ENCODE measurements at regions of chr12 and their contacts with region 1.

Region 1: DNA sequence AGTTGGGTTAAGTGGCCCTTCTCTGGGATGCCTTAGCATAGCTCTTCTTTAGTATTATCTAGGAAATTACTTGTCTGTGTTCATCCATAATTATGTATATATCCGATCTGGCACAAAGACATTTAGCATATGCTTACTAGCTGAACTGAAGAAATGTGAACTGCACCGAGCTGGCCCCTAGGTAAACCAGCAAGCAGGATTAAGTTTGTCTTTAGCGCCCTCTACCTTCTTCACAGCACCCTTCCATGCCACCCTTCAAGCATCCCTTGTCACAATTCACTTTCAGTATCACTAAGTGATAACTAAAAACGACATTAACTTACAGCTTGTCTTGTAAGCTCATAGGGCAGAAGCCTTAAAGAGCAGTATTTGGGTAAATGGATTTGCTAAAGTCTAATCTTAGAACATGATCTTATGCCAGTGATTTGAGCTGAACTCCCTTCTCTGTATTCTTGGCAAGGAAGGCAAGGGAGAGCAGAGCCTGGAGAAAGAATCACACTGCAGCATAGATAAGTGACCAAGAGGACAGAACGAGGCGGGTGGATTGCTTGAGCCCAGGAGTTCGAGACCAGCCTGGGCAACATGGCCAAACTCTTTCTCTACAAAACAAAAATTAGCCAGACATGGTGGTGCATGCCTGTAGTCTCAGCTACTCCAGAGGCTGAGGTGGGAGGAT is 2.6 kb upstream of the HAL start:
- H3K4me3 ChIP-seq: no peak overlapping the region
- H3K27ac ChIP-seq: no peak overlapping the region
- H3K4me1 ChIP-seq: no peaks in the 10 kb centered on the region
- CTCF ChIP-seq: peak; percentile 59; the same call in 1 of the 2 replicates

Region 2: DNA sequence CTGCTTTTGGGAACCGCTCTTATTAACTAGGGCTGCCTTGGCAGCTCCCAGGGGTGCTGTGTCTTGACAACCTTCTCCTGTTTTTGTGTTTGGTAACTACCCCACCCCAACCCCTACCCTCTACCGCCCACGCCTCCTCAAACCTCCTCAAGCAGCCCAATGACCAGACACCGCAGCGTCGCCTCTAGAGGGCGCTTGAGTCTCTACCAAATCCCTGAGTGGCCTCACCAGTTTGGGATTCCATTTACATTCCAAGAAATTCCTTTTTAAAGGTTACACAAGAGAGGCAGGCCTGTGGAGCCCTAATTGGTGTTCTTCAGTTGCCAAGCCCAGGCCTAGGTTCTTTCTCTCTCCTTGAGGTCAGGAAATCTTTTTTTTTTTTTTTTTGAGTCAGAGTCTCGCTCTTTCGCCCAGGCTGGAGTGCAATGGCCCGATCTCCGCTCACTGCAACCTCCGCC is 375.1 kb before region 1 on chr12:
- CTCF ChIA-PET with region 1: no interaction called
- POLR2A ChIA-PET with region 1: no interaction called
- H3K4me3 ChIP-seq: no peak overlapping the region
- H3K27ac ChIP-seq: no peak overlapping the region
- H3K4me1 ChIP-seq: no peaks in the 10 kb centered on the region; the same call in 1 of the 2 replicates
- CTCF ChIP-seq: no peak

Region 3: GRCh38 chr12:95918194-95918993 is 80.4 kb before region 1 on chr12:
- CTCF ChIA-PET with region 1: interaction called, 58 read pairs
- POLR2A ChIA-PET with region 1: no interaction called
- H3K4me3 ChIP-seq: no peak overlapping the region
- H3K27ac ChIP-seq: no peak overlapping the region
- H3K4me1 ChIP-seq: no peaks in the 10 kb centered on the region
- CTCF ChIP-seq: peak; percentile 71; the same call in 1 of the 2 replicates

Region 4: DNA sequence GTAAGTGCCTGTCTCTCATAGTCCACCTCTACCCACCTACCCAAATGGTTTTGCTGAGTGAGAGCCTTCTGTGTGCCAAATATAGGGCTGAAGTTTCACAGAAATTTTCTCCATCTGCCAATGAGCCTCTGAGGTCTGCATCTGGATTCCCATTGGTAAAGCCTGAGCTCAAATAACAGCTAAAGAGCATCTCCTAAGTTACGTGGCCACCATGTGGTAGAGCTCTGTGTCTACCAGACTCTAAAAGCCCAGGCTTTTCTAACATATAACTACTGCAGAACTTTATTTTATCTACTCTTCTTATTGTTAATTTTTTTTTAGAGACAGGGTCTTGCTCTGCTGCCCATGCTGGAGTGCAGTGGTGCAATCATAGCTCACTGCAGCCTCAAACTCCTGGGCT is 39.6 kb before region 1 on chr12:
- CTCF ChIA-PET with region 1: interaction called, 12 read pairs
- POLR2A ChIA-PET with region 1: no interaction called
- H3K4me3 ChIP-seq: no peak overlapping the region
- H3K27ac ChIP-seq: no peak overlapping the region
- H3K4me1 ChIP-seq: no peaks in the 10 kb centered on the region
- CTCF ChIP-seq: no peak

Region 5: DNA sequence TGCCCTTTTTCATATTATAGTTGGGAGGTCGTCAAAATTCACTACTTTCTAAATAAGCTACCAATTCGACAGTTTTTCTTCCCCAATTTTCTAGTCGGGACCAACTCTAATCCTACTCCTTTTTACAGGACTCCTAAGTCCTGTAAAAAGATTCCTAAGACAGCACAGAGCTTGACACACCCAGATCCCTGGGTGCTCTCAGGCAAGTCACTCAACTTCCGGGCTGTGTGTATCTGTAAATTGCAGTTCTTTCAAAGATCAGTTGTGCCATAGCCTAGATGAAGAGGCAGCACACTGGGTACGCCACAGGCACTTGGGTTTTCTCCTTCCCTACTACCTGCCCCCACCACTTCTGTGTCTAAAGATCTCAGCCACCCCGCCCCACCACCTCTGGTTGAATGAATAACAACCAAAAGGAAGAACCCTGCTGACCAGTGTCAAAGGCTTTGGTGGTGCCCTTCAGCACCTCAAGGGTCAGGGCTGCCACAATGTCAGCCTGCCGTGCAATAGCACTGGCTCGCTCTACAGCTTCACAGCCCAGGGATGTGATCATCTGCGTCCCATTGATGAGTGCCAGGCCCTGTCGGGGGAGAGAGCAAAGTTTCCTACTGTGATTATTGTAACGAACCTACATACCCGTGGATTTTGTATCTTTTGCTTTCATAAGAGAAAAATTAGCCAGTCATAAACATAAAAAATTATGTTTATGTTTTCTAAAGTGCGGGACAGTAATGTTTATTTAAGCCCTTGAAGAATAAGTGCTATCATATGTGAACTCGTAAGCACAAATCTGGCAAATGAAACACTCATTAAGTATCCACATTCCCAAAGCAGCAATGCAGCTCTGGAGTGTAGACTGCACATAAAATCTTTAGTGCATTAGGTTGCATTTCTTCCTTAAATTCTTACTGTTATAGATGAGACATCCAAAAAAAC is 11.8 kb before region 1 on chr12:
- CTCF ChIA-PET with region 1: interaction called, 22 read pairs
- POLR2A ChIA-PET with region 1: no interaction called
- H3K4me3 ChIP-seq: no peak overlapping the region
- H3K27ac ChIP-seq: no peak overlapping the region
- H3K4me1 ChIP-seq: no peaks in the 10 kb centered on the region
- CTCF ChIP-seq: no peak

Region 6: GRCh38 chr12:96014943-96015599 is 16.3 kb after region 1 on chr12:
- CTCF ChIA-PET with region 1: interaction called, 14 read pairs
- POLR2A ChIA-PET with region 1: no interaction called
- H3K4me3 ChIP-seq: no peak overlapping the region
- H3K27ac ChIP-seq: no peak overlapping the region
- H3K4me1 ChIP-seq: no peaks in the 10 kb centered on the region
- CTCF ChIP-seq: no peak

Region 7: GRCh38 chr12:96035278-96036236 is 36.8 kb after region 1 on chr12 and contains the start of gene LTA4H:
- CTCF ChIA-PET with region 1: no interaction called
- POLR2A ChIA-PET with region 1: interaction called, 10 read pairs
- H3K4me3 ChIP-seq: peak within 1 kb of the TSS; percentile 100
- H3K27ac ChIP-seq: peak within 1 kb of the TSS; percentile 75
- H3K4me1 ChIP-seq: peaks cover 5% of the 10 kb centered on the region; the same call in 1 of the 2 replicates
- CTCF ChIP-seq: no peak

Region 8: GRCh38 chr12:96094201-96094600 is 95.5 kb after region 1 on chr12:
- CTCF ChIA-PET with region 1: no interaction called
- POLR2A ChIA-PET with region 1: no interaction called
- H3K4me3 ChIP-seq: no peak overlapping the region
- H3K27ac ChIP-seq: no peak overlapping the region
- H3K4me1 ChIP-seq: peaks cover 8% of the 10 kb centered on the region
- CTCF ChIP-seq: no peak